CD8-positive, alpha-beta T cell (primary cell): ENCODE measurements at regions of chr6 and their contacts with region 1.

Region 1: GRCh38 chr6:34414999-34415858 is 10.6 kb downstream of the RPS10 start:
- DNase-seq: peak in 8 of 9 experiments; percentile 6 to 72 (median 42)
- ATAC-seq: peak; percentile 84
- H3K4me3 ChIP-seq: no peak overlapping the region
- H3K4me3 Mint-ChIP-seq: no peak overlapping the region
- H3K27ac ChIP-seq: no peak overlapping the region
- H3K27ac Mint-ChIP-seq: no peak overlapping the region
- H3K4me1 ChIP-seq: no peaks in the 10 kb centered on the region
- H3K4me1 Mint-ChIP-seq: peaks cover 15% of the 10 kb centered on the region
- H3K27me3 ChIP-seq: no peaks in the 10 kb centered on the region
- H3K27me3 Mint-ChIP-seq: no peaks in the 10 kb centered on the region
- CTCF ChIP-seq: peak; percentile 55

Region 2: GRCh38 chr6:34189806-34190503 is 225.3 kb before region 1 on chr6:
- CTCF ChIA-PET with region 1: interaction called, 89 read pairs
- POLR2A ChIA-PET with region 1: interaction called, 10 read pairs
- intact Hi-C with region 1: no loop called
- DNase-seq: peak in 8 of 9 experiments; percentile 46 to 78 (median 66)
- ATAC-seq: peak; percentile 65
- H3K4me3 ChIP-seq: no peak overlapping the region
- H3K4me3 Mint-ChIP-seq: no peak overlapping the region
- H3K27ac ChIP-seq: no peak overlapping the region
- H3K27ac Mint-ChIP-seq: no peak overlapping the region
- H3K4me1 ChIP-seq: peaks cover 7% of the 10 kb centered on the region
- H3K4me1 Mint-ChIP-seq: peaks cover 14% of the 10 kb centered on the region
- H3K27me3 ChIP-seq: no peaks in the 10 kb centered on the region
- H3K27me3 Mint-ChIP-seq: no peaks in the 10 kb centered on the region
- CTCF ChIP-seq: no peak

Region 3: GRCh38 chr6:34202329-34203201 is 212.7 kb before region 1 on chr6:
- CTCF ChIA-PET with region 1: interaction called, 89 read pairs
- POLR2A ChIA-PET with region 1: no interaction called
- intact Hi-C with region 1: no loop called
- DNase-seq: no peak
- ATAC-seq: no peak
- H3K4me3 ChIP-seq: no peak overlapping the region
- H3K4me3 Mint-ChIP-seq: no peak overlapping the region
- H3K27ac ChIP-seq: no peak overlapping the region
- H3K27ac Mint-ChIP-seq: no peak overlapping the region
- H3K4me1 ChIP-seq: no peaks in the 10 kb centered on the region
- H3K4me1 Mint-ChIP-seq: peaks cover 4% of the 10 kb centered on the region
- H3K27me3 ChIP-seq: no peaks in the 10 kb centered on the region
- H3K27me3 Mint-ChIP-seq: no peaks in the 10 kb centered on the region
- CTCF ChIP-seq: no peak

Region 4: DNA sequence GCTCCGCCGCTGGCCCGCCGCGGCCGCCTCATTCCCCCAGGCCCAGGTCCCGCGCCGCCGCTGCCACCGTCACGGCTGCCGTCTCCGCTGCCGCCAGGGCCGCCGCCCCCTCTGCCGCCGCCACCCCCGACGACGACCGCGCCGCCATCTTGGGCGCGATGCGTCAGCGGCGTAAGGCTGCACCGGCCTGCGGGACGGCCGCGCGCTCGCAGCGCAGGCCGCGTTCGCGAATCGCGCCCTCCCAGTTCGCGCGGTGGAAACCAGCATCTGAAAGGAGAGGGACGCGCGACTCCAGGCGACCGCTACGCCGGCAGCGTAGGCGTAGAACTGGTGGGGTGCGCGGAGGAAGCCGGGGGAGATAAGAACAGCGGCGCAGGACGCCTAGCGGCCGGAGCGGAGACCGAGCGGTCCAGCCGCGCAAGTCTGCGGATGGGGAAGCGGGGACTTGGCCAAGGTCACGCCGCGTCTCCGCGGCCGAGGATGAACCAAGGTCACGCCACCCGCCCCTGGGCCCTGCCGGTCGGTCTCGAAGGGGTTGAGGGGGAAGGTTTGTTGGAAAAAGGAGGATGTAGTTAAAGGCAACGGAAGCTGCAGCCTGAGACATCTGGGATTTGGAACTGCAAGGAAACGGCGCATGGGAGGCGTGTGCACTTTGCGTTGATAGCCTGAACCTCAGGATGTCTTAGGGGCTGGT is 22.6 kb before region 1 on chr6 and contains the start of gene NUDT3:
- CTCF ChIA-PET with region 1: interaction called, 16 read pairs
- POLR2A ChIA-PET with region 1: interaction called, 17 read pairs
- intact Hi-C with region 1: no loop called
- DNase-seq: peak; percentile 90 to 98 (median 93)
- ATAC-seq: peak; percentile 90
- H3K4me3 ChIP-seq: peak within 1 kb of the TSS; percentile 78 to 96
- H3K4me3 Mint-ChIP-seq: peak within 1 kb of the TSS; percentile 72
- H3K27ac ChIP-seq: peak within 1 kb of the TSS; percentile 71 to 75
- H3K27ac Mint-ChIP-seq: peak within 1 kb of the TSS; percentile 94
- H3K4me1 ChIP-seq: peaks cover 15% of the 10 kb centered on the region
- H3K4me1 Mint-ChIP-seq: peaks cover 26% of the 10 kb centered on the region
- H3K27me3 ChIP-seq: no peaks in the 10 kb centered on the region
- H3K27me3 Mint-ChIP-seq: no peaks in the 10 kb centered on the region
- CTCF ChIP-seq: peak; percentile 77
- total RNA-seq, gene NUDT3: 12.5 to 12.9 TPM